IMR-90 (cell line): ENCODE measurements at regions of chr1 and their contacts with region 1.

Region 1: DNA sequence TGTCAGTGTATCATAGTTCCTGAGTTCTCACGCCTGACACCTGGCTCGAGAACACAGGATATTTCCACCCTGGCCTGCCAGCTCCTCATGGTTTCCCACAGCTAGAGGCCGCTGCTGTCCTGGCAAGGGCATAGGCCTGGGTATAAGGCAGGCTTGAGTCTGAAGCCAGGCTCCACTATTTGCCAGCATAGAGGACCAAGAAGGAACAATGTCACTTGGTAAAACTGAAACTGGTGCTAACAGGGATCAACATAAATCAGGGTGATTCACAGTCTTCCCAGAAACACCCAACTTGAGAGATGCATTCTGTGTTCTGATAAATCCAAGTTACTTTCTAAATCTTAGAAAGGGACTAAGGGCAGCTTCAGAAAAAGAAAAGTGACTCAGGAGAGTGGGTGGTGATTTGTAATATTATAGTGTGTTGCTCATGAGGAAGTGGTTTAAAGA is 6.9 kb upstream of the S100A2 start:
- DNase-seq: peak; percentile 82
- ATAC-seq: peak; percentile 82
- H3K4me3 ChIP-seq: no peak overlapping the region
- H3K27ac ChIP-seq: peak overlapping the region; percentile 36; the same call in 1 of the 2 replicates
- H3K4me1 ChIP-seq: peaks cover 16% of the 10 kb centered on the region
- H3K27me3 ChIP-seq: no peaks in the 10 kb centered on the region
- CTCF ChIP-seq: peak; percentile 86
- POLR2A ChIP-seq: peak; percentile 46; the same call in 1 of the 2 replicates
- RAD21 ChIP-seq: peak; percentile 89

Region 2: DNA sequence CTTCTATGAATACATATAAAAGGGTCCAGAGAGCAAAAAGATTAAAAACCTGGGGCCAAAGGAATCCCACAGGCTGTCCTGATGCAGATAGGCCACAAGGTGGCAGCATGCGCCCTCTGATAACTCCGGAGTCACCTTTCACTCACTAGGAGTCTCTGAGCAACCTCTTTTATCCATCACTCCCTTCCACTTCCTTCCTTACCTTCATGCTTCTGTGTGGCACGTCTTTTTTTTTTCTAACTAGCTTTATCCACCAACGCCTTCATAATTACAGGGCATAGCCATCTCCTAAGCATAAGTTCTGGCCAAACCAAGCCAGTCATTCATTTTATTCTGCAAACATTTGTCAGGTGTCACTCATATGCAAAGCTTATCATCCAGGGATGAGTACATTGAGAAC is 220.1 kb before region 1 on chr1:
- CTCF ChIA-PET with region 1: interaction called, 3 read pairs
- POLR2A ChIA-PET with region 1: no interaction called
- dilution Hi-C with region 1: no loop called
- in situ Hi-C with region 1: no loop called
- intact Hi-C with region 1: loop called (anchors 1 kb)
- DNase-seq: peak; percentile 62
- ATAC-seq: peak; percentile 93
- H3K4me3 ChIP-seq: no peak overlapping the region
- H3K27ac ChIP-seq: no peak overlapping the region
- H3K4me1 ChIP-seq: no peaks in the 10 kb centered on the region
- H3K27me3 ChIP-seq: peaks cover 4% of the 10 kb centered on the region; the same call in 1 of the 2 replicates
- CTCF ChIP-seq: peak; percentile 92
- POLR2A ChIP-seq: no peak
- RAD21 ChIP-seq: peak; percentile 91

Region 3: GRCh38 chr1:153532769-153533599 is 39.6 kb before region 1 on chr1:
- CTCF ChIA-PET with region 1: interaction called, 19 read pairs
- POLR2A ChIA-PET with region 1: interaction called, 28 read pairs
- dilution Hi-C with region 1: no loop called
- in situ Hi-C with region 1: loop called (anchors 5 kb)
- intact Hi-C with region 1: loop called (anchors 1 kb)
- DNase-seq: peak; percentile 84
- ATAC-seq: peak; percentile 49
- H3K4me3 ChIP-seq: peak overlapping the region; percentile 8
- H3K27ac ChIP-seq: peak overlapping the region; percentile 91
- H3K4me1 ChIP-seq: peaks cover 25% of the 10 kb centered on the region
- H3K27me3 ChIP-seq: no peaks in the 10 kb centered on the region
- CTCF ChIP-seq: peak; percentile 94
- POLR2A ChIP-seq: peak; percentile 51
- RAD21 ChIP-seq: peak; percentile 87

Region 4: GRCh38 chr1:153626922-153627796 is 54.6 kb after region 1 on chr1 and contains the start of gene S100A13:
- CTCF ChIA-PET with region 1: interaction called, 16 read pairs
- POLR2A ChIA-PET with region 1: interaction called, 7 read pairs
- dilution Hi-C with region 1: no loop called
- in situ Hi-C with region 1: no loop called
- intact Hi-C with region 1: loop called (anchors 2 kb)
- DNase-seq: peak; percentile 96
- ATAC-seq: peak; percentile 87
- H3K4me3 ChIP-seq: peak within 1 kb of the TSS; percentile 54
- H3K27ac ChIP-seq: peak within 1 kb of the TSS; percentile 96
- H3K4me1 ChIP-seq: peaks cover 14% of the 10 kb centered on the region
- H3K27me3 ChIP-seq: no peaks in the 10 kb centered on the region
- CTCF ChIP-seq: peak; percentile 60
- POLR2A ChIP-seq: peak; percentile 99
- RAD21 ChIP-seq: peak; percentile 42
- total RNA-seq, gene S100A13: 122 and 225 TPM in 2 replicates

Region 5: GRCh38 chr1:153649863-153650235 is 77.3 kb after region 1 on chr1:
- CTCF ChIA-PET with region 1: interaction called, 5 read pairs
- POLR2A ChIA-PET with region 1: interaction called, 8 read pairs
- dilution Hi-C with region 1: no loop called
- in situ Hi-C with region 1: no loop called
- intact Hi-C with region 1: loop called (anchors 1 kb)
- DNase-seq: no peak
- ATAC-seq: no peak
- H3K4me3 ChIP-seq: no peak overlapping the region
- H3K27ac ChIP-seq: no peak overlapping the region
- H3K4me1 ChIP-seq: peaks cover 7% of the 10 kb centered on the region
- H3K27me3 ChIP-seq: no peaks in the 10 kb centered on the region
- CTCF ChIP-seq: no peak
- POLR2A ChIP-seq: no peak
- RAD21 ChIP-seq: no peak

Region 6: DNA sequence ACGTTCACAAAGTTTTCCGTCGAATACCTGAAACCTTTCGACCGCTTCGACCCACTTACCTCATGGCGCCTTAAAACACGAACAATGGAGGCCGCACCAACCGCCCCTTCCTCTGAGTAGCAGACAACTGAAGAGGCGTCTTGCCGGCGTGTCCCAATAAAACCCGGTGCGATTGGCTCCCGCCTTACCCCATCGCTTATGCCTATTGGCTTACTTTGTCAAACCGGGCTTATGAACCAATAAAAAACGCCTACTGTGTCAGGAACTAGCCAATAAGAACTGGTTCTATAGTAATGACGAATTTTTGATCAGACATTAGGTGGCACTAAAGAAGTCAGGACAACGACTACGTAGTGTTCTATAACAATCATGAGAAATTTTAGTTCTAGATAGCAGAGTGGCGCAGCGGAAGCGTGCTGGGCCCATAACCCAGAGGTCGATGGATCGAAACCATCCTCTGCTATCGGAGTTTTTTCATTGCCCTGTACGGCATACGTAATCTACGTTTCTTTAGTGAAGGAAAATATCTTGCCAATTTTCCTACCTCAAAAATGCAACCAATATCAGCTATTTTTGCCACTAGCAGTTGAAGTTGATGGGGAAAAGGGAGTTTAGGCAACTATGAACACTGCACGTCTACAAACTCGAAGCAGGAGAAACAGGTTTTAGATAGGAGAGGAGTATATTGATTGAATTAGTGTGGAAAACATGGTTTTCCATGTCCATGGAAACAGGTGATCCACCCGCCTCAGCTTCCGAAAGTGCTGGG is 98.5 kb after region 1 on chr1 and contains the start of gene ILF2:
- CTCF ChIA-PET with region 1: interaction called, 3 read pairs
- POLR2A ChIA-PET with region 1: no interaction called
- dilution Hi-C with region 1: no loop called
- in situ Hi-C with region 1: no loop called
- intact Hi-C with region 1: loop called (anchors 2 kb)
- DNase-seq: peak; percentile 100
- ATAC-seq: peak; percentile 93
- H3K4me3 ChIP-seq: peak within 1 kb of the TSS; percentile 65
- H3K27ac ChIP-seq: peak within 1 kb of the TSS; percentile 61
- H3K4me1 ChIP-seq: peaks cover 1% of the 10 kb centered on the region; the same call in 1 of the 2 replicates
- H3K27me3 ChIP-seq: no peaks in the 10 kb centered on the region
- CTCF ChIP-seq: peak; percentile 37
- POLR2A ChIP-seq: peak; percentile 97
- RAD21 ChIP-seq: no peak
- total RNA-seq, gene ILF2: 405 and 504 TPM in 2 replicates